ENCODE measurements at regions of chr16 and their contacts with region 1.

Region 1: GRCh38 chr16:24504472-24505345 is 34.7 kb upstream of the RBBP6 start:
- DNase-seq: peak in 4 of 6 donors; percentile 16 to 62 (median 24)
- ATAC-seq: peak; percentile 66 to 96 (median 92)
- H3K4me3 ChIP-seq: no peak overlapping the region
- H3K27ac ChIP-seq: no peak overlapping the region
- H3K4me1 ChIP-seq: no peaks in the 10 kb centered on the region
- H3K27me3 ChIP-seq: no peaks in the 10 kb centered on the region
- CTCF ChIP-seq: peak; percentile 55 to 70 (median 66)

Region 2: DNA sequence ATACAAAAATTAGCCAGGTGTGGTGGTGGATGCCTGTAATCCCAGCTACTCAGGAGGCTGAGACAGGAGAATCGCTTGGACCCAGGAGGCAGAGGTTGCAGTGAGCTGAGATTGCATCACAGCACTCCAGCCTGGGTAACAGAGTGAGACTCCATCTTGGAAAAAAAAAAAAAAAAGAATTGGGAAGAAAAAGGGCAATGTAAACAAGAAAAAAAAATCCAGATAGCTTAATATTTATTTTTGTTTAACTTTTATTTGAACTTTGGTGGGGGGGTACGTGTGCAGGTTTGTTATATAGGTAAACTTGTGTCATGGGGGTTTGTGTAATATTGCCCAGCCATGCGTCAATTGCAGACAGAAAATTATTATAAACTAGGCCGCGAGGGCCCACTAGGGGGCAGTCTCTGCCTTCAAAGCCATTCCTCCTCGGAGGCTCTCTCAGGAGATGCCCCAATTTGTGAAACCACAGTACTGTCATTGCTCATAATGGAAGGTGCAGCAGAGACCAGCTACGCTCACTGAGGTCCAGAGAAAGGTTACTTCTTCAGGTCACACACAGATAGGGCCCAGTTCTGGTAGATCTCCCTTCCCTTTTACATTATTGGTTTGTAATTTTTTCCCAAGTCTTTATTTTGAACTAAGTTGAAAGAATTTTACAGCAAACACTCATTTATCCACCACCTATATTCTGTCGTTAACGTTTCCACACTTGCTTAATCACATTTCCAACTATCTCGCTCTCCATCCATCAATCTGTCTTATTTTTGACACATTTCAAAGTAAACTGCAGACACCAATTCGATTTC is 462.7 kb before region 1 on chr16:
- intact Hi-C with region 1: loop called in 1 of 3 experiments (anchors 5 kb)
- DNase-seq: peak in 5 of 6 donors; percentile 28 to 75 (median 42)
- ATAC-seq: peak in 3 of 4 donors; percentile 73 to 89 (median 73)
- H3K4me3 ChIP-seq: no peak overlapping the region
- H3K27ac ChIP-seq: no peak overlapping the region
- H3K4me1 ChIP-seq: no peaks in the 10 kb centered on the region
- H3K27me3 ChIP-seq: no peaks in the 10 kb centered on the region
- CTCF ChIP-seq: peak; percentile 45 to 62 (median 54)

Region 3: DNA sequence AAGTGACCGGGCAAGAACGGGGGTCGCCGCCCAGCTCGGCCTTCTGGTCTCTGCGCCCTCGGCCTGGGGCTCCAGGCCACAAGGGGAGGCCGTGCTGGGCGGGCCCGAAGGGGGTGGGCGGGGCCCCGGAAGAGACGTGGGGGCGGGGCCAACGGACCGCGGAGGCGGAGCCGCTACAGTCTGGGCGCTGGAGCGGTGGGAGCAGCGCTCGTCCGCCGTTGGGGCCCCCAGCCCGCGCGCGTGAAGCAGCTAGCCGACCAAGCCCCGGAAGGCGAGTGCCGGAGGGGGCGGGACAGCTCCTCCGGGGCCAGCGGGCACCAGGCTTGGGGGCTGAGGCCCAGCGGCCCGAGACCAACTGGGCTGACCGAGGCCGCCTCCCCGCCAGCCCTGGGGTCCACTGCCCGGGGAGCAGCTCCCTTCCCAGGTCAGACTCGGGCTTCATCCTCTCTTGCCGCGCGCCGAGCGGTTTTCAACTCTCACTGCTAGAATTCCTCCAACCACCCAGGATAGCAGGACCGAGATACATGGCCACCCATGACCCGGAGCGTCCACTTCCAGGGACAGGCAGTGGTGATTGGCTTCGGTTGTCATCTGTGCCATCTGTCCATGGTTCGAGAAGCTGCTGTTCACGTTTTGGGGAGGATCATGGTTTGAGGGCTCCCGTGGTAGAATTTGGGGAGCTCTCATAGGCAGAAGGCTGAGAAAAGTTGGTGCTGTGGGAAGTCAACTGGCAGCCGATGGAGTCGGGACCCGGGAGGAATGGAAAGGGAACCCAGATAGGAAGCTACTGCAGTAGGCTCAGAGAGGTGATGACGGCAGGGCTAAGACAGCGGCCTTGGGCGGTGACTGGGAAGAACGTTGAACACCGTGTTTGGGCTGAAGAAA is 562.3 kb after region 1 on chr16:
- intact Hi-C with region 1: no loop called
- DNase-seq: peak; percentile 79 to 96 (median 87)
- ATAC-seq: peak; percentile 98 to 99 (median 99)
- H3K4me3 ChIP-seq: peak overlapping the region; percentile 73 to 87 (median 76)
- H3K27ac ChIP-seq: peak overlapping the region; percentile 79 to 88 (median 84)
- H3K4me1 ChIP-seq: peaks cover 4 to 9% (median 5%) of the 10 kb centered on the region in 3 donors
- H3K27me3 ChIP-seq: no peaks in the 10 kb centered on the region
- CTCF ChIP-seq: no peak